HepG2 (cell line): ENCODE measurements at regions of chr3 and their contacts with region 1.

Region 1: GRCh38 chr3:27712136-27713077 is 9.7 kb downstream of the EOMES start:
- DNase-seq: peak; percentile 55
- ATAC-seq: peak; percentile 94
- H3K4me3 ChIP-seq: peak overlapping the region; percentile 42 to 71 (median 58); a peak in 5 of 6 replicates
- H3K27ac ChIP-seq: no peak overlapping the region
- H3K4me1 ChIP-seq: peaks cover 34% of the 10 kb centered on the region
- H3K27me3 ChIP-seq: peaks cover 12 to 51% of the 10 kb centered on the region in 2 experiments
- CTCF ChIP-seq: peak; percentile 86
- EP300 ChIP-seq: no peak
- POLR2A ChIP-seq: no peak
- RAD21 ChIP-seq: peak; percentile 59; the same call in 1 of the 2 replicates

Region 2: DNA sequence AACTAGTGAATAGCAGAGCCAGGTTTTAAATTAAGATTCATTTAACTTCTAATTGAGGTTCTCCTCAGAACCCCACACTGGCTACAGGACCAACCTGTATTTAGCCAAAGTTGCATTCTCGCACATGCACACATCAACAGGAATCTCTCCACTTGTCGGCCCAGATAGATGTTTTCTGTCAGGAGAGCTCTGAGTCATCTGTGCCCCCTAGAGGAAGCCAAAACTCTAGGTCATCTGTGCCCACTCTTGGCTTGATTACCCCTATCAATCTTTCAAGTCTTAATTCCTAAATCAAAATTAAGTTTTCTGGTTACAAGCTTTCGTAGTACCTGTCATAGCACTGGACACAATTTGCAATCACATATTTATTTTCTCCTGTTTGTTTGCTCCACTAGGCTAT is 114.6 kb after region 1 on chr3:
- CTCF ChIA-PET with region 1: no interaction called
- POLR2A ChIA-PET with region 1: no interaction called
- in situ Hi-C with region 1: no loop called
- intact Hi-C with region 1: no loop called
- DNase-seq: no peak
- ATAC-seq: peak; percentile 57
- H3K4me3 ChIP-seq: no peak overlapping the region
- H3K27ac ChIP-seq: no peak overlapping the region
- H3K4me1 ChIP-seq: no peaks in the 10 kb centered on the region
- H3K27me3 ChIP-seq: 0 out of 5 replicates have a peak, but pooled peaks cover 0 to 7% of the 10 kb centered on the region in 2 experiments
- CTCF ChIP-seq: 0 out of 2 replicates have a peak, but pooled peaks have one; percentile 17
- EP300 ChIP-seq: no peak
- POLR2A ChIP-seq: no peak
- RAD21 ChIP-seq: no peak

Region 3: GRCh38 chr3:27880969-27881892 is 168.8 kb after region 1 on chr3:
- CTCF ChIA-PET with region 1: no interaction called
- POLR2A ChIA-PET with region 1: no interaction called
- in situ Hi-C with region 1: no loop called
- intact Hi-C with region 1: loop called (anchors 10 kb)
- DNase-seq: no peak
- ATAC-seq: 0 out of 3 replicates have a peak, but pooled peaks have one; percentile 31
- H3K4me3 ChIP-seq: no peak overlapping the region
- H3K27ac ChIP-seq: no peak overlapping the region
- H3K4me1 ChIP-seq: no peaks in the 10 kb centered on the region
- H3K27me3 ChIP-seq: no peaks in the 10 kb centered on the region
- CTCF ChIP-seq: no peak
- EP300 ChIP-seq: no peak
- POLR2A ChIP-seq: no peak
- RAD21 ChIP-seq: no peak

Region 4: GRCh38 chr3:28286595-28286994 is 574.2 kb after region 1 on chr3:
- CTCF ChIA-PET with region 1: interaction called, 4 read pairs
- POLR2A ChIA-PET with region 1: no interaction called
- in situ Hi-C with region 1: no loop called
- intact Hi-C with region 1: loop called (anchors 5 kb)
- DNase-seq: peak; percentile 34
- ATAC-seq: peak; percentile 80
- H3K4me3 ChIP-seq: no peak overlapping the region
- H3K27ac ChIP-seq: no peak overlapping the region
- H3K4me1 ChIP-seq: no peaks in the 10 kb centered on the region
- H3K27me3 ChIP-seq: no peaks in the 10 kb centered on the region; a peak in 1 of 5 replicates
- CTCF ChIP-seq: peak; percentile 42
- EP300 ChIP-seq: no peak
- POLR2A ChIP-seq: no peak
- RAD21 ChIP-seq: no peak

Region 5: DNA sequence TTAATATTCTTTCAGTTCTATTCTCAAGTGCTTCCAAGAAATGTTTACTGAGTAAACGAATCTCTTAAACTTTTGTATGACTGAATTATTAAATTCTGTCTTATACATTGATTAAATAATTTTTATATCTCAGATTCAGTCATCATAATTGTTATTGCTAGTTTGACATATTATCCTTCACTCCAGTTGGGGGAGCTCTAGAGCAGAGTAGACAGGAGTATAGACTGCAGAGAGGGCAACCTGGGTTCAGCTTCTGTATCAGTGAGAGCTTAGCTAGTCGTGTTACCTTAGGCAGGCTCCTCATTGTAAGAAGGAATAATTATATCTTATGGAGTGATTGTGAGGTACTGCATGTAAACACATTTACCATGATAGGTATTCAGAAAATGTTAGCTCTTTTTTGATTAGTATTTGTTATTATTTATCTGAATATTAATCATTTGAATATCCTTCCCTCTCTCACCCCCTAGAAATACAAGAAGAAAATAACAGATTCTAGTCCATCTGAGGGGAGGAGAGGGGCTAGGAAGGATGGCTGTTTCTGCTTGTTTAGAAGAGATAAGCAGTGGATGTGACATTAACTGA is 605.1 kb after region 1 on chr3:
- CTCF ChIA-PET with region 1: no interaction called
- POLR2A ChIA-PET with region 1: no interaction called
- in situ Hi-C with region 1: loop called (anchors 5 kb)
- intact Hi-C with region 1: no loop called
- DNase-seq: peak; percentile 57
- ATAC-seq: peak; percentile 84
- H3K4me3 ChIP-seq: no peak overlapping the region
- H3K27ac ChIP-seq: no peak overlapping the region
- H3K4me1 ChIP-seq: peaks cover 33% of the 10 kb centered on the region
- H3K27me3 ChIP-seq: no peaks in the 10 kb centered on the region
- CTCF ChIP-seq: peak; percentile 66
- EP300 ChIP-seq: no peak
- POLR2A ChIP-seq: no peak
- RAD21 ChIP-seq: no peak